ENCODE measurements at regions of chr4 and their contacts with region 1.

Region 1: GRCh38 chr4:173505924-173506518 is 24.0 kb downstream of the HAND2 start:
- DNase-seq: peak; percentile 79
- CTCF ChIP-seq: peak; percentile 81

Region 2: GRCh38 chr4:173252024-173252935 is 253.7 kb before region 1 on chr4:
- CTCF ChIA-PET with region 1: no interaction called
- POLR2A ChIA-PET with region 1: no interaction called
- DNase-seq: peak; percentile 30
- CTCF ChIP-seq: no peak

Region 3: GRCh38 chr4:173386751-173387150 is 119.3 kb before region 1 on chr4:
- CTCF ChIA-PET with region 1: no interaction called
- POLR2A ChIA-PET with region 1: no interaction called
- DNase-seq: no peak
- CTCF ChIP-seq: no peak

Region 4: GRCh38 chr4:173486714-173487392 is 19.2 kb before region 1 on chr4:
- CTCF ChIA-PET with region 1: interaction called, 11 read pairs
- POLR2A ChIA-PET with region 1: no interaction called
- DNase-seq: no peak
- CTCF ChIP-seq: no peak

Region 5: DNA sequence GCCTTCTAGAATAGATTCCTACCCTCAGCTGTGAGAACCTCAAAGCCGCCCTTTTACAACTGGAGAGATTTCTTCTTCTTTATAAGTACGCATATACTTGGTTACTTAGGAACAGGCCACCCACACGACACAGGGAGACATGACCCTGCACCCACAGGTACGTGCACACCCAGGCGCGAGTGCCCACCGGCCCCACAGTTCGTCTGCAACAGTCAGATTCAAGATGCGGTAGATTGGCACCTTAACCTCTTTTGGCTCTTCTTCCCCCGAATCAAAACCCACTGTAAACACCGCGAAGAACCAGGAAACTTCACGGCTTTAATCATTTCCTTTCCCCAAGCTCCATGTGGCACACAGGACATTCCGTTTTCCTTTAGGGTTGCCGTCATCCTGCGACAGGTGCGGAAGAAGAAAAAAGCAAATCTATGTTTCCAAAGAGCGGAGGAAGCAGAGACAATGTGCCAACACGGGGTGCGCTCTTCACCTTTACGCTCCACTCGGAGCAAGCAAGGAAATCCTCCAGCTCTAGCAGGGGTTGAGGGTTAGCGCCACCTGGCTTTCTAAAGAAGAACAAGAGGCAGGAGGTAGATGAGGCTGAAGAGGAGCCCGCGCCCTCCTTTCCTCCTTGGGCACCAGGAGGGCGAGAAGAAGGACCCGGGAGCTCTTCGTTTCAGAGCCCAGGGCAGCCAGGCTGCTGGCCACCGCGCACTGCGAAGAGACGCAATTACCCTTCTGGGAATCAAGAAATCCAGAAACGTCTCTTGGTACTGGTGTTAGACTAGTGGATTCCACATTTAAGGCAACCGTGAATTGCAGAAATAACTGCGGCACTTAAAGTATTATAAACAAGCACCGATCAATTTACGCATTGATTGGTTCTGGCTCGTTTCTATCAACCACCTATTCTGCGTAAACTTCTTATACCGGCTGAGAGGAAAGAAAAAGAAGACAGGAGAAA is 11.7 kb before region 1 on chr4:
- CTCF ChIA-PET with region 1: interaction called, 13 read pairs
- POLR2A ChIA-PET with region 1: no interaction called
- DNase-seq: peak; percentile 80
- CTCF ChIP-seq: peak; percentile 91

Region 6: GRCh38 chr4:173521467-173522122 is 15.6 kb after region 1 on chr4:
- CTCF ChIA-PET with region 1: no interaction called
- POLR2A ChIA-PET with region 1: no interaction called
- DNase-seq: no peak
- CTCF ChIP-seq: no peak

Region 7: GRCh38 chr4:174120446-174121295 is 614.6 kb after region 1 on chr4:
- CTCF ChIA-PET with region 1: interaction called, 19 read pairs
- POLR2A ChIA-PET with region 1: no interaction called
- DNase-seq: peak; percentile 34
- CTCF ChIP-seq: peak; percentile 52

Measured in GM10248 (cell line).